ENCODE measurements at regions of chr2 and their contacts with region 1.

Region 1: GRCh38 chr2:197322724-197323720 is 12.4 kb upstream of the ANKRD44 start:
- DNase-seq: peak; percentile 41
- H3K4me3 Mint-ChIP-seq: peak overlapping the region; percentile 62
- H3K27ac Mint-ChIP-seq: peak overlapping the region; percentile 88
- H3K4me1 Mint-ChIP-seq: peaks cover 73% of the 10 kb centered on the region
- H3K27me3 Mint-ChIP-seq: no peaks in the 10 kb centered on the region

Region 2: GRCh38 chr2:197075759-197076337 is 247.2 kb before region 1 on chr2:
- CTCF ChIA-PET with region 1: no interaction called
- intact Hi-C with region 1: loop called (anchors 5 kb)
- DNase-seq: peak; percentile 35
- H3K4me3 Mint-ChIP-seq: no peak overlapping the region
- H3K27ac Mint-ChIP-seq: no peak overlapping the region
- H3K4me1 Mint-ChIP-seq: peaks cover 44% of the 10 kb centered on the region
- H3K27me3 Mint-ChIP-seq: no peaks in the 10 kb centered on the region

Region 3: GRCh38 chr2:197356136-197356535 is 33.1 kb after region 1 on chr2:
- CTCF ChIA-PET with region 1: interaction called, 3 read pairs
- intact Hi-C with region 1: loop called (anchors 1 kb)
- DNase-seq: no peak
- H3K4me3 Mint-ChIP-seq: peak overlapping the region; percentile 17
- H3K27ac Mint-ChIP-seq: no peak overlapping the region
- H3K4me1 Mint-ChIP-seq: peaks cover 28% of the 10 kb centered on the region
- H3K27me3 Mint-ChIP-seq: no peaks in the 10 kb centered on the region